Activated T-helper 1 cell treated with anti-CD3 and anti-CD28 coated beads, Interleukin-12 subunit alpha, Interleukin-12 subunit beta, Interleukin-2, Interleukin-4 antibody, amounts not matched to agents 30 ng/mL and 10 ng/mL and 1 ng/mL, durations not matched to agents 14 hours and 24 hours and 36 hours (primary cell): ENCODE measurements at regions of chr7 and their contacts with region 1.

Region 1: GRCh38 chr7:139915864-139916716 is 87.0 kb downstream of the TBXAS1 start:
- DNase-seq: peak; percentile 65
- H3K4me3 Mint-ChIP-seq: no peak overlapping the region
- H3K27ac Mint-ChIP-seq: peak overlapping the region; percentile 74
- H3K4me1 Mint-ChIP-seq: peaks cover 29% of the 10 kb centered on the region
- H3K27me3 Mint-ChIP-seq: peaks cover 2% of the 10 kb centered on the region

Region 2: DNA sequence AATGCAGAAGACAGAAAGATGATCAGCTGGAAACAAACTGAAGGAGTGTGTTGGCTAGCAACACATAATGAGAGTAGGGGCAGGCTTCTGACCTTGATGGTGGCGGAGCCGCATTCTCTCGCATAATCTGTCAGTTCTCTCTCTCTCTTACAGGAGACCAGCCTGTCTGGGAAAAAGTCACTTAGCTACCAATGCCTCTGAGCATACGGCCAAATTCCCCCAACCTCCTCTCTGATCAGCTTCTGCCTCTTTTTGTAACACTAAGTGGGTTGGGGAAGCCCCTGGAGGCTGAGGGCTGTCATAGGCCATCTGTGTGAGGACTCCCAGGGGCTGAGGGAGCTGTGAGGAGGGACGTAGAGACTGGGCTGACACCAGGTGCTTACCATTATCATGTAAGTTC is 242.9 kb before region 1 on chr7:
- intact Hi-C with region 1: loop called (anchors 2 kb)
- DNase-seq: peak; percentile 20
- H3K4me3 Mint-ChIP-seq: no peak overlapping the region
- H3K27ac Mint-ChIP-seq: peak overlapping the region; percentile 19
- H3K4me1 Mint-ChIP-seq: peaks cover 51% of the 10 kb centered on the region
- H3K27me3 Mint-ChIP-seq: peaks cover 3% of the 10 kb centered on the region

Region 3: GRCh38 chr7:139822855-139823254 is 93.2 kb before region 1 on chr7:
- intact Hi-C with region 1: no loop called
- DNase-seq: no peak
- H3K4me3 Mint-ChIP-seq: no peak overlapping the region
- H3K27ac Mint-ChIP-seq: no peak overlapping the region
- H3K4me1 Mint-ChIP-seq: peaks cover 4% of the 10 kb centered on the region
- H3K27me3 Mint-ChIP-seq: peaks cover 16% of the 10 kb centered on the region

Region 4: GRCh38 chr7:139936760-139937310 is 20.7 kb after region 1 on chr7:
- intact Hi-C with region 1: loop called (anchors 1 kb)
- DNase-seq: no peak
- H3K4me3 Mint-ChIP-seq: no peak overlapping the region
- H3K27ac Mint-ChIP-seq: peak overlapping the region; percentile 69
- H3K4me1 Mint-ChIP-seq: peaks cover 27% of the 10 kb centered on the region
- H3K27me3 Mint-ChIP-seq: peaks cover 8% of the 10 kb centered on the region

Region 5: DNA sequence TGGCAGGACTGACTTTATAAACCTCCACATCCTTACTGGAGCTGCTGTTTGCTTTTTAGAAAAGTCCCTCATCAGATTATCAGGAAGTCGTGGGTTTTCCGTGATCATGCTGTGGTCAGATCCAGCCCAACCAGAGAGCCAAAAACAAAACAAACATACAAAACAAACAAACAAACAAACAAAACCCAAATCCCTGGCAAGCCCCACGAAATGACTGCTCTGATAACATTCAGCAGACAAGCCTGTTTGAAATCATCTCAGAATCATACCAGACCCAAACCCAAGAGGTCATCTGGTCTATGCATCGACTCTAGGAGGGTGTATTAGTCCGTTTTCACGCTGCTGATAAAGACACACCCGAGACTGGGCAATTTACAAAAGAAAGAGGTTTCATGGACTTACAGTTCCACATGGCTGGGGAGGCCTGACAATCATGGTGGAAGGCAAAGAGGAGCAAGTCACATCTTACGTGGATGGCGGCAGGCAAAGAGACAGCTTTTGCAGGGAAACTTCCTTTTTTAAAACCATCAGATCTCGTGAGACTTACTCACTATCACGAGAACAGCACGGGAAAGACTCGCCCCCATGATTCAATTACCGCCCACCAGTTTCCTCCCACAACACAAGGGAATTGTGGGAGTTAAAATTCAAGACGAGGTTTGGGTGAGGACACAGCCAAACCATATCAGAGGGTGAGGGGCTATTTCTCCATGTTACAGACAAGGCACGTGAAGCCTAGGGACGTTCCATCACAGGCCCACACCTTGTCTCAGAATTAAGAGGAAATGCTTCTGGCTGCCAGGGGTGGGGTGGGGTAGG is 61.0 kb after region 1 on chr7:
- intact Hi-C with region 1: loop called (anchors 1 kb)
- DNase-seq: no peak
- H3K4me3 Mint-ChIP-seq: no peak overlapping the region
- H3K27ac Mint-ChIP-seq: no peak overlapping the region
- H3K4me1 Mint-ChIP-seq: peaks cover 28% of the 10 kb centered on the region
- H3K27me3 Mint-ChIP-seq: peaks cover 5% of the 10 kb centered on the region